PC-9 (cell line): ENCODE measurements at regions of chr3 and their contacts with region 1.

Region 1: GRCh38 chr3:188270423-188270972 is 116.5 kb downstream of the LPP start:
- DNase-seq: peak; percentile 80 to 87
- H3K4me3 ChIP-seq: no peak overlapping the region
- H3K27ac ChIP-seq: no peak overlapping the region
- H3K4me1 ChIP-seq: peaks cover 43% of the 10 kb centered on the region
- H3K27me3 ChIP-seq: no peaks in the 10 kb centered on the region
- CTCF ChIP-seq: no peak

Region 2: DNA sequence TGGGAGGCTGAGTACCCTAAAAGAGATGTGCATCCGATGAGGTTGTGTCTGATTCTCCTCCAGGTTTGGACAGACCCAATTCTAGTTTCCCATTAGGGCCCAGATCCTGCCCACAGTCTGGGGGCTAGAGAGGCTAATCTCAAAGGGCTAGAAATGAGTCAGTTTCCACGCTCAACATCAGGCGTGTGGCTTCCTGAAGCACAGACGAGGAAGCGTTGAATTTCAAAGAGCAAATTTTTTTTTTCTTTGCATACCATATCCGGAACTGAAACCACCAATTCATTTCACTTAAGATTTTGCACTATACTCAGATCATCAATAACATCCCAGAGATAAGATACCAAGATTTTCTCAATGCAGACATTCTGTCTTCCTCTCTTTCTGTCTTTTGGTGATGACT is 351.4 kb before region 1 on chr3:
- CTCF ChIA-PET with region 1: no interaction called
- POLR2A ChIA-PET with region 1: interaction called, 3 read pairs
- intact Hi-C with region 1: loop called (anchors 10 kb)
- DNase-seq: no peak
- H3K4me3 ChIP-seq: no peak overlapping the region
- H3K27ac ChIP-seq: no peak overlapping the region
- H3K4me1 ChIP-seq: peaks cover 94% of the 10 kb centered on the region
- H3K27me3 ChIP-seq: no peaks in the 10 kb centered on the region
- CTCF ChIP-seq: no peak

Region 3: GRCh38 chr3:188067932-188068331 is 202.6 kb before region 1 on chr3:
- CTCF ChIA-PET with region 1: interaction called, 12 read pairs
- POLR2A ChIA-PET with region 1: no interaction called
- intact Hi-C with region 1: no loop called
- DNase-seq: peak in 1 of 2 experiments; percentile 50
- H3K4me3 ChIP-seq: no peak overlapping the region
- H3K27ac ChIP-seq: no peak overlapping the region
- H3K4me1 ChIP-seq: peaks cover 9% of the 10 kb centered on the region; the same call in 1 of the 2 replicates
- H3K27me3 ChIP-seq: no peaks in the 10 kb centered on the region
- CTCF ChIP-seq: no peak

Region 4: GRCh38 chr3:188220097-188220788 is 50.3 kb before region 1 on chr3:
- CTCF ChIA-PET with region 1: no interaction called
- POLR2A ChIA-PET with region 1: interaction called, 37 read pairs
- intact Hi-C with region 1: no loop called
- DNase-seq: no peak
- H3K4me3 ChIP-seq: no peak overlapping the region
- H3K27ac ChIP-seq: no peak overlapping the region
- H3K4me1 ChIP-seq: no peaks in the 10 kb centered on the region
- H3K27me3 ChIP-seq: no peaks in the 10 kb centered on the region
- CTCF ChIP-seq: no peak

Region 5: DNA sequence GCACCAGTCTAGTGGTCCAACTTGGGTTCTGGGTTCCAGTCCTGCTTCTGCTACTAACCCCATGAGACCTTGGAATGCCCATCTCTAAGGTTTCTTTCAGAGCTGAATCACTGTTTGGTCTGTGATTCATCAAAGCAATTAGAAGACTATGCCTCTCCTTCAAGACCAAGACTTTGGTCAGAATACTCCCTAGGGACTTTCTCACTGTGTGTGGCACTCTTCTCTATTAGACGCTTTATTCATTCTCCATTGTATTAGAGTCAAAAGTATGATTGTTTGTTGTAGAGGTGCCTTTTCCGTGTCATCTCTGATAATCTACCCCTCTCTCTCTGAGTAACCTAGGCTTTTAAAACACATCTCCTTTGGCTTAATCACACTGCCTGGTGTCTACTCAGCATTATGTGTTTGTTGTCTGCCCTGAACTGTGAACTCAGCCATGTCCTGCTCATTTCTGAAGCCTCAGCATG is 26.1 kb before region 1 on chr3:
- CTCF ChIA-PET with region 1: no interaction called
- POLR2A ChIA-PET with region 1: no interaction called
- intact Hi-C with region 1: no loop called
- DNase-seq: peak in 1 of 2 experiments; percentile 73
- H3K4me3 ChIP-seq: no peak overlapping the region
- H3K27ac ChIP-seq: peak overlapping the region; percentile 48
- H3K4me1 ChIP-seq: peaks cover 34% of the 10 kb centered on the region
- H3K27me3 ChIP-seq: no peaks in the 10 kb centered on the region
- CTCF ChIP-seq: no peak

Region 6: GRCh38 chr3:188348435-188349244 is 78.1 kb after region 1 on chr3:
- CTCF ChIA-PET with region 1: interaction called, 6 read pairs
- POLR2A ChIA-PET with region 1: no interaction called
- intact Hi-C with region 1: loop called (anchors 2 kb)
- DNase-seq: peak; percentile 69 to 85
- H3K4me3 ChIP-seq: no peak overlapping the region
- H3K27ac ChIP-seq: peak overlapping the region; percentile 37
- H3K4me1 ChIP-seq: peaks cover 17% of the 10 kb centered on the region
- H3K27me3 ChIP-seq: no peaks in the 10 kb centered on the region
- CTCF ChIP-seq: no peak

Region 7: DNA sequence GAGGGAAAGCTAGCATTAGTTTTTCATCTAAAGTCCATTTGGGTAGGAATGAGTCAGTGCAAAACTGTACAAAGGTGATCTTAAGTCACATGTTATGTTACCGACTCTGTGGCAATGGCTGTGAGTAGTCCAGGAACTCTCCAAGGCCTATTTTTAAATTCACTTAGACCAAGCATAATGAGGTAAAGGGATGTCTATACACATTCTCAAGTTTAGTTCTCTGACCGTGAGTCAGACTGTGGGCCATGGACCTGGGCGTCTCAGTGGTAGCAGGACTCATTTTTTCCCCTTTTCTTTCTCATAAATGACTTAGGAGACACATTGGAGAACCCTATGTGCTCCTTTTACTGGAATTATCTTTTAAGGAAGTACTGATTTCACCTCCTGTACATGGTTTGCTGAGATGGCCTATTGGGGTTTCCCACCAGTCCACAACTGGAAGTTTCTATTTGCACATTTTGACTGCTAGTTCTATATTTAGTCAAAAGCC is 412.6 kb after region 1 on chr3:
- CTCF ChIA-PET with region 1: no interaction called
- POLR2A ChIA-PET with region 1: interaction called, 5 read pairs
- intact Hi-C with region 1: loop called (anchors 5 kb)
- DNase-seq: peak; percentile 39 to 64
- H3K4me3 ChIP-seq: no peak overlapping the region
- H3K27ac ChIP-seq: peak overlapping the region; percentile 11; the same call in 1 of the 2 replicates
- H3K4me1 ChIP-seq: peaks cover 38% of the 10 kb centered on the region
- H3K27me3 ChIP-seq: no peaks in the 10 kb centered on the region
- CTCF ChIP-seq: no peak